ENCODE measurements at regions of chr2 and their contacts with region 1.

Region 1: GRCh38 chr2:33380001-33380609 is 96.3 kb upstream of the RASGRP3 start:
- DNase-seq: no peak
- ATAC-seq: peak; percentile 24; the same call in 1 of the 2 replicates
- H3K4me3 Mint-ChIP-seq: no peak overlapping the region
- H3K27ac Mint-ChIP-seq: no peak overlapping the region
- H3K4me1 Mint-ChIP-seq: peaks cover 18% of the 10 kb centered on the region
- H3K27me3 Mint-ChIP-seq: no peaks in the 10 kb centered on the region
- CTCF ChIP-seq: peak; percentile 92

Region 2: DNA sequence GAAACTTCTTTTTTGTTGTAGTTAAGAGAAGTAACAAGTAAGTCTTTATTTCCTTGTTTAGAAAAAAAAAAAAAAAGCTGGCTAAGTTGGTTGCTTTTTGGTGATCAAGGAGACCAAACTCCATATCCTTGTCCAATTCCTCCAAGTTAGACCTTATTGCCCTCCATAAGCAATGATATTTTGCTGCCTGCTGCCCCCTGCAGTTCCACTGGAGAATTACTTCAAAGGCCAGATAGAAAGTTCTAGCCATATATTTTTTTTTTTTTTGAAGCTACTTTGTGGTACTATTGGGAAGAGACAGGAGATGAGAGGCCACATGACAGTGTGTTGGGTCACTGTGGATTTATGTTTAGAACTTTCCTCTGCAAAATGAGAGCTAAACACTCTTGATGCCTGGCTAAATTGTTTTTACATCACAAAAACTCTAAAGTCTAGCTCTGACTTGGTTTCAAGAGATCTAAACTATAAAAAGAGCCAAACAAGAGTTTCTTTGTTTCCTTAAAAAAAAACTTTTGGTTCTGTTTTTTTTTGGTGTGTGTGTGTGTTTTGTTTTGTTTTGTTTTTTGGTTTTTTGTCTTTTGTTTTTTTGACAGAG is 15.6 kb after region 1 on chr2:
- CTCF ChIA-PET with region 1: interaction called, 15 read pairs
- POLR2A ChIA-PET with region 1: interaction called, 4 read pairs
- DNase-seq: peak; percentile 68
- ATAC-seq: peak; percentile 41; the same call in 1 of the 2 replicates
- H3K4me3 Mint-ChIP-seq: no peak overlapping the region
- H3K27ac Mint-ChIP-seq: no peak overlapping the region
- H3K4me1 Mint-ChIP-seq: peaks cover 18% of the 10 kb centered on the region
- H3K27me3 Mint-ChIP-seq: no peaks in the 10 kb centered on the region
- CTCF ChIP-seq: peak; percentile 35; the same call in 1 of the 2 replicates